ENCODE measurements at regions of chr19 and their contacts with region 1.

Region 1: GRCh38 chr19:17260842-17261325 is 3.7 kb downstream of the USHBP1 start:
- DNase-seq: peak; percentile 87 to 88
- H3K4me3 ChIP-seq: no peak overlapping the region
- H3K27ac ChIP-seq: no peak overlapping the region
- H3K4me1 ChIP-seq: peaks cover 20% of the 10 kb centered on the region
- H3K27me3 ChIP-seq: no peaks in the 10 kb centered on the region
- CTCF ChIP-seq: peak; percentile 96

Region 2: DNA sequence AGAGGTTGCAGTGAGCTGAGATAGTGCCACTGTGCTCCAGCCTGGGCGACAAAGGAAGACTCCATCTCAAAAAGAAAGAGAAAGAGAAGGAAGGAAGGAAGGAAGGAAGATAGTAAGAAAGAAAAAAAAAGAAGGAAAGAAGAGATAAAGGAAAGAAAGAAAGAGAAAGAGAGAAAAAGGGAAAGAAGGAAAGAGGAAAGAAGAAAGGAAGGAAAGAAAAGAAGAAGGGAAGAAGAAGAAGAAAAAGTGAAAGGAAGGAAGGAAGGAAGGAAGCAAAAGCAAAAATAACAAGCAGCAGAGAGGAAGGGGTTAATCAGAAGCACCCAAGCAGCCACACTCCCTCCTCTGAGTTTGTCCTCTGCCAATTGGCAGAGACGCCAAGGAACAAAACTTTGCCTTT is 509.2 kb before region 1 on chr19:
- CTCF ChIA-PET with region 1: no interaction called
- POLR2A ChIA-PET with region 1: interaction called, 10 read pairs
- intact Hi-C with region 1: no loop called
- DNase-seq: no peak
- H3K4me3 ChIP-seq: no peak overlapping the region
- H3K27ac ChIP-seq: no peak overlapping the region
- H3K4me1 ChIP-seq: no peaks in the 10 kb centered on the region
- H3K27me3 ChIP-seq: no peaks in the 10 kb centered on the region
- CTCF ChIP-seq: no peak

Region 3: DNA sequence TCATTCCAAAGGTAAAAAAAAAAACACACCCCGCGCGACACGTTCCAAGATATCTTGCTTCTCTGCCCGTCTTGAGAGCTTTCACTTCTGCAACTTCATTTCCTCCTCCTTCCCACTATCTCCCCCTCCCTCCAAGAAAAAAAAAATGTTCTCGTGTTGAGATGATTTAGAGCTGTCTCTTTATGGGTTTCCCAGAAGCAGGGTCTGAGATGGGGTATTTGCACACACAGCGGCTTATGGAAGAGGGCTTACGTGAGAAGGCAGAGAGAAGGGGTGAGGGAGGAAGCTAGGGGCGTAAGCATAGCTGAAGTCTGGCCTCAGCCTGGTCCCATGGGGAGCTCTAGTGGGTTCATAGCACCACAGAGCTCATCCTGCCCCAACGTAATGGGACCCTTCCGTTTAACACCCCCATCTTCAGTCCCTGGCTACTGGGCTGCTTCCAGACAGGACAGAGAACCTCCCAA is 77.0 kb before region 1 on chr19:
- CTCF ChIA-PET with region 1: no interaction called
- POLR2A ChIA-PET with region 1: no interaction called
- intact Hi-C with region 1: no loop called
- DNase-seq: no peak
- H3K4me3 ChIP-seq: no peak overlapping the region
- H3K27ac ChIP-seq: no peak overlapping the region
- H3K4me1 ChIP-seq: no peaks in the 10 kb centered on the region
- H3K27me3 ChIP-seq: no peaks in the 10 kb centered on the region
- CTCF ChIP-seq: no peak

Region 4: GRCh38 chr19:17385878-17386611 is 125.2 kb after region 1 on chr19:
- CTCF ChIA-PET with region 1: no interaction called
- POLR2A ChIA-PET with region 1: no interaction called
- intact Hi-C with region 1: no loop called
- DNase-seq: peak in 1 of 2 experiments; percentile 55
- H3K4me3 ChIP-seq: no peak overlapping the region
- H3K27ac ChIP-seq: no peak overlapping the region
- H3K4me1 ChIP-seq: peaks cover 9% of the 10 kb centered on the region
- H3K27me3 ChIP-seq: no peaks in the 10 kb centered on the region
- CTCF ChIP-seq: peak; percentile 97

Region 5: GRCh38 chr19:17522988-17523872 is 262.3 kb after region 1 on chr19:
- CTCF ChIA-PET with region 1: no interaction called
- POLR2A ChIA-PET with region 1: no interaction called
- intact Hi-C with region 1: no loop called
- DNase-seq: no peak
- H3K4me3 ChIP-seq: no peak overlapping the region
- H3K27ac ChIP-seq: no peak overlapping the region
- H3K4me1 ChIP-seq: no peaks in the 10 kb centered on the region
- H3K27me3 ChIP-seq: no peaks in the 10 kb centered on the region
- CTCF ChIP-seq: no peak

Measured in PC-9 (cell line).